CD4-positive, alpha-beta memory T cell (primary cell): ENCODE measurements at regions of chr3 and their contacts with region 1.

Region 1: DNA sequence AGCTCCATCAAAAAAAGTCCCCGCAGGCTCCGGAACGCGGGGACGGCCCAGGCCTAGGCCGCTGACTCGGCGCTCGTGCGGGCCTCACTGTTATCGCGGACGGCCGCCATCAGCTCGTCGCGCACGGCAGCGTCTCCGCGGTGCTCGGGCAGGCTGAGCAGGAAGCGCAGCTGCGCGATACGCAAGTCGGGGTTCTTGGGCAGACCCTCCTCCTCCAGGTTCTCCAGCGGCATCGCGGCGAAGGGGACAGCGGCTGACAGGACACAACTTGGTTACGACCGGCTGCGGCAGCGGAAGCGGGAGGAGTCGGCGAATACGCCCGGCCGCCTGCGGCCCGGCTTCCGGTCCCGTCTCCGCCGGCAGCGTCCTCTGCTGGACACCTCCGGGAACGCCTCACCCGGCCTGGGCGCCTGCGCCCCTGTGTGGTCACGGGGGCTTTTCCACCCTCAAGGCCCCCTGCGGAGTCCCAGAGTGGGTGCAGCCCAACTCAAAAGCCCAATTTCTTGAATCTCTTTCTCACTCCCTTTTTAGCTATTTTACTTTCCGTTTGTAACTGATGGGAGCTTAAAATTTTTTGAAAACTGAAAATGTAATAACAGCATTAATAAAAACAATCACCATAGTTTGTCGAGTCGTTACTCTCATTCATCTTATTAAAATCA is at the start of gene PSMD6:
- DNase-seq: peak; percentile 90 to 96 (median 91)
- H3K4me3 ChIP-seq: peak within 1 kb of the TSS; percentile 89 to 90
- H3K4me3 Mint-ChIP-seq: peak within 1 kb of the TSS; percentile 76 to 93 (median 90)
- H3K27ac ChIP-seq: peak within 1 kb of the TSS; percentile 89
- H3K27ac Mint-ChIP-seq: peak within 1 kb of the TSS; percentile 86 to 97 (median 95)
- H3K4me1 ChIP-seq: peaks cover 42% of the 10 kb centered on the region
- H3K4me1 Mint-ChIP-seq: peaks cover 17 to 39% (median 25%) of the 10 kb centered on the region in 4 donors
- H3K27me3 ChIP-seq: peaks cover 4% of the 10 kb centered on the region
- H3K27me3 Mint-ChIP-seq: peaks cover 4 to 6% of the 10 kb centered on the region in 2 donors
- total RNA-seq, gene PSMD6: 65.7 to 68.1 TPM

Region 2: GRCh38 chr3:62965311-62965710 is 1058.0 kb before region 1 on chr3:
- CTCF ChIA-PET with region 1: no interaction called
- POLR2A ChIA-PET with region 1: no interaction called
- intact Hi-C with region 1: no loop called
- DNase-seq: no peak
- H3K4me3 ChIP-seq: no peak overlapping the region
- H3K4me3 Mint-ChIP-seq: no peak overlapping the region
- H3K27ac ChIP-seq: no peak overlapping the region
- H3K27ac Mint-ChIP-seq: no peak overlapping the region
- H3K4me1 ChIP-seq: no peaks in the 10 kb centered on the region
- H3K4me1 Mint-ChIP-seq: no peaks in the 10 kb centered on the region
- H3K27me3 ChIP-seq: no peaks in the 10 kb centered on the region
- H3K27me3 Mint-ChIP-seq: no peaks in the 10 kb centered on the region

Region 3: DNA sequence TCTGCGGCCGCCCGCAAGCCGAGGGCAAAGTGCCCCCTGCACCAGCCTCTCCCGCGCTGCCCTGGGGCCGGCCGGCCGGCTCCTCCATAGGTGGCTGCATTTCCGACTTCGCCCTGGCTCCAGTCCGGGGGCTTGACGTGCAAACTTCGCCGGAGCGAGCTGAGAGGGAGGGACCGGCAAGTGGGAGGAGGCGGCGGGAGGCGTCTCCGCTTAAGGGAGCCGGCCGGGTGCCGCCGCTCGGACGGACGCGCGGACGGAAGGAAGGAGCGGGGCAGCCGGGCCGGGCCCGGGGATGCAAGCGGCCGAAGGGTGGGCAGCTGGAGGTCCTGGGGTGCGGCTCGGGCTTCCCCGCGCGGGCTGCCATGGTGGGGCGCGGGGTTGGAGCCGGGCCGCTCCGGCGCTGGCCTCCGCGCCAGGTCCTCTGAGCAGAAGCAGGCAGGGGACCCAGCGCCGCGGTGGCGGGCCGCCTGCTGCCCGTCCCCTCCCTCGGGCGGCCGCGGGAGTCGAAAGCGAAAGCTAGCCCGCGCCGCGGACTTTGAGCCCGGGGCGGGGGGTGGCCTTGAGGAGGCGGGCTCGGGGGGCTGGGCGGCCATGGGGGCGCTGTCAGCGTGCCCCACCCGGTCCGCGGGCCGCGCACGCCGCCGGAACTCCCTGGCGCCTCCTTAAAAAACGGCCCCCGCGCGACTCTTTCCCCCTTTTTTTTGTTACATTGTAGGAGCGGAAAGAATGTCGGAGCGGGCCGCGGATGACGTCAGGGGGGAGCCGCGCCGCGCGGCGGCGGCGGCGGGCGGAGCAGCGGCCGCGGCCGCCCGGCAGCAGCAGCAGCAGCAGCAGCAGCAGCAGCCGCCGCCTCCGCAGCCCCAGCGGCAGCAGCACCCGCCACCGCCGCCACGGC is 111.2 kb before region 1 on chr3 and contains the start of gene SCAANT1:
- CTCF ChIA-PET with region 1: interaction called, 5 read pairs
- POLR2A ChIA-PET with region 1: interaction called, 13 read pairs
- intact Hi-C with region 1: loop called (anchors 1 kb)
- DNase-seq: peak; percentile 84 to 87 (median 84)
- H3K4me3 ChIP-seq: peak within 1 kb of the TSS; percentile 70 to 77
- H3K4me3 Mint-ChIP-seq: peak within 1 kb of the TSS; percentile 89 to 96 (median 94)
- H3K27ac ChIP-seq: peak within 1 kb of the TSS; percentile 84
- H3K27ac Mint-ChIP-seq: peak within 1 kb of the TSS; percentile 96 to 99 (median 98)
- H3K4me1 ChIP-seq: peaks cover 36% of the 10 kb centered on the region
- H3K4me1 Mint-ChIP-seq: peaks cover 30 to 61% (median 41%) of the 10 kb centered on the region in 4 donors
- H3K27me3 ChIP-seq: no peaks in the 10 kb centered on the region
- H3K27me3 Mint-ChIP-seq: no peaks in the 10 kb centered on the region
- total RNA-seq, gene SCAANT1: not detected

Region 4: DNA sequence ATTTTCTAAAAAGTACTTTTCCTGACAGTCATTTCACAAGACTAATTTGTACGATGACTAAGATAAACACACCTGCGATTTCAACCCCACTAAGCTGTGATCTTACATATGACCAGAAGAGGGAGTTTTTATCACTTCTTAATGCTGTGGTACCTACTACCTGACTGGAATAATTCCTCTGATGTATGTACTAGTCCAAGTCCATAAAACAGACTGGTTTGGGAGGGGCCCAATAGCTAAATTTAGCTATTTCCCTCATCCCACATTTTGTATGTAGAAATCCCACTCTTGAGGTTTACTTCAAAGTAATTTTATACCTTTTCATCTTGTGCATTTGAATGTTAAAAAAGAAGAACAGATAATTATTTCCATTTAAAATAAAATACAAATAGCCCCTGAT is 61.4 kb before region 1 on chr3:
- CTCF ChIA-PET with region 1: interaction called, 101 read pairs
- POLR2A ChIA-PET with region 1: interaction called, 42 read pairs
- intact Hi-C with region 1: loop called (anchors 1 kb)
- DNase-seq: peak in 4 of 5 donors; percentile 65 to 68 (median 66)
- H3K4me3 ChIP-seq: no peak overlapping the region
- H3K4me3 Mint-ChIP-seq: no peak overlapping the region
- H3K27ac ChIP-seq: no peak overlapping the region
- H3K27ac Mint-ChIP-seq: peak overlapping the region in 4 of 7 donors; percentile 32 to 74 (median 57)
- H3K4me1 ChIP-seq: peaks cover 33% of the 10 kb centered on the region
- H3K4me1 Mint-ChIP-seq: peaks cover 37 to 59% (median 47%) of the 10 kb centered on the region in 4 donors
- H3K27me3 ChIP-seq: no peaks in the 10 kb centered on the region
- H3K27me3 Mint-ChIP-seq: no peaks in the 10 kb centered on the region

Region 5: GRCh38 chr3:63975723-63976122 is 47.6 kb before region 1 on chr3:
- CTCF ChIA-PET with region 1: interaction called, 40 read pairs
- POLR2A ChIA-PET with region 1: interaction called, 9 read pairs
- intact Hi-C with region 1: no loop called
- DNase-seq: no peak
- H3K4me3 ChIP-seq: no peak overlapping the region
- H3K4me3 Mint-ChIP-seq: peak overlapping the region in 7 of 8 donors; percentile 19 to 84 (median 53)
- H3K27ac ChIP-seq: no peak overlapping the region
- H3K27ac Mint-ChIP-seq: peak overlapping the region; percentile 68 to 91 (median 87)
- H3K4me1 ChIP-seq: peaks cover 97% of the 10 kb centered on the region
- H3K4me1 Mint-ChIP-seq: peaks cover 79 to 98% (median 90%) of the 10 kb centered on the region in 4 donors
- H3K27me3 ChIP-seq: no peaks in the 10 kb centered on the region
- H3K27me3 Mint-ChIP-seq: no peaks in the 10 kb centered on the region

Region 6: DNA sequence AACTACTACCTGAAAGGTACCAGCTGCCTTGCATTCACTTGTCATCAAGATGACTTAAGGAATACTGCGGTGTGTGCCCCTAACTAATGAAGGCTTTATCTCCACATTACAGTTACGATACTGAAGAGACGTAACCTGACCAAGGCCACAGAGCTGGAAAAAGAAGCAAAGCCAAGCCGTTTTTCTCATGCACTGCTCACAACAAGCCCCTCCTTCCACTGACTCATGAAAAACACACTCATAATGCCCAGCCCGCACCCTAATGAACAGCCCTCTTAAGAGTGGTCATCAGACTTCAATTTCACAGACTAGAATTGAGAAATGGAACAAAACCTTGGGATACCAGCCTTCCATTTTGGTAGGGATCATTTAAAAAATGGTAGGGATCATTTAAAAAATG is 11.6 kb before region 1 on chr3:
- CTCF ChIA-PET with region 1: interaction called, 36 read pairs
- POLR2A ChIA-PET with region 1: interaction called, 29 read pairs
- intact Hi-C with region 1: no loop called
- DNase-seq: no peak
- H3K4me3 ChIP-seq: no peak overlapping the region
- H3K4me3 Mint-ChIP-seq: no peak overlapping the region
- H3K27ac ChIP-seq: no peak overlapping the region
- H3K27ac Mint-ChIP-seq: peak overlapping the region in 4 of 7 donors; percentile 7 to 81 (median 54)
- H3K4me1 ChIP-seq: no peaks in the 10 kb centered on the region
- H3K4me1 Mint-ChIP-seq: peaks cover 18 to 27% (median 26%) of the 10 kb centered on the region in 4 donors
- H3K27me3 ChIP-seq: no peaks in the 10 kb centered on the region
- H3K27me3 Mint-ChIP-seq: no peaks in the 10 kb centered on the region

Region 7: GRCh38 chr3:64431526-64432091 is 408.3 kb after region 1 on chr3:
- CTCF ChIA-PET with region 1: no interaction called
- POLR2A ChIA-PET with region 1: no interaction called
- intact Hi-C with region 1: no loop called
- DNase-seq: no peak
- H3K4me3 ChIP-seq: no peak overlapping the region
- H3K4me3 Mint-ChIP-seq: no peak overlapping the region
- H3K27ac ChIP-seq: no peak overlapping the region
- H3K27ac Mint-ChIP-seq: no peak overlapping the region
- H3K4me1 ChIP-seq: no peaks in the 10 kb centered on the region
- H3K4me1 Mint-ChIP-seq: no peaks in the 10 kb centered on the region
- H3K27me3 ChIP-seq: no peaks in the 10 kb centered on the region
- H3K27me3 Mint-ChIP-seq: peaks cover 0 to 2% of the 10 kb centered on the region in 2 donors